ENCODE measurements at regions of chr16 and their contacts with region 1.

Region 1: DNA sequence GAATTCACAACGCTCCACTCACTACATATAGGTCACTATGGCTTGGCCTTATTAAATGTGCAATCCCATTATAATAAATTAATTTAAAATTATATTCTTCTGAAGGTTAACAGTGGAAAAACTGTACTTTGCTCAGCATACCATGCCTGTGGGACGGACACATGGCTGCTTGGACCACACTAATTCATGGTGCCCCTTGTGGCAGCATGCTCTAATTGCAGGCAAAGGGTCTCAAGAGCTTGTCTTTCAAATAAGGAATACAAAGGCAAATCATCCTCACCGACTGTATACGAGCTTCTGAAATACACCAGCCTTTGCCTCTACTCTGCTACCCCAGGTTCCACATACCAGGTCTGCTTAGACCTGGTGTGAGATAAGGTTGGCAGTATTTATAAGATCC is 11.7 kb downstream of the SMPD3 start:
- DNase-seq: no peak
- ATAC-seq: no peak
- H3K4me3 ChIP-seq: no peak overlapping the region
- H3K4me3 Mint-ChIP-seq: no peak overlapping the region
- H3K27ac ChIP-seq: no peak overlapping the region
- H3K27ac Mint-ChIP-seq: no peak overlapping the region
- H3K4me1 ChIP-seq: peaks cover 0 to 16% of the 10 kb centered on the region in 2 donors
- H3K4me1 Mint-ChIP-seq: peaks cover 7 to 30% (median 26%) of the 10 kb centered on the region in 7 donors
- H3K27me3 ChIP-seq: no peaks in the 10 kb centered on the region
- H3K27me3 Mint-ChIP-seq: peaks cover 0 to 47% (median 4%) of the 10 kb centered on the region in 5 donors

Region 2: DNA sequence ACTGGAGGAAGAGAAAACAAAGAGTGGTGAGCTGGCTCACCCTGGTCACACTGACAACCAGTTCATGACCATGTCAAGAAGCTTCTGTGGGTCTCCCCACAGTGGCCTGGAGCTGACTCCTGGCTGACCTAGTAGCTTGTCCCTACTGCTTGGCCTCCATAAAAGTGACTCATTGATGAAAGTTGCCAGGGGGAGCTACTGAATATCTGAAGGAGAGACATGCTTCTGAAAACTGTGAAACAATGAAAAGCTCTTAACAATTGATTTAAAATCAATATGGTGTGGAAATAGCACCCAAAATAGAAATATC is 10.3 kb before region 1 on chr16:
- CTCF ChIA-PET with region 1: interaction called, 5 read pairs
- POLR2A ChIA-PET with region 1: interaction called, 11 read pairs
- intact Hi-C with region 1: no loop called
- DNase-seq: no peak
- ATAC-seq: no peak
- H3K4me3 ChIP-seq: peak overlapping the region; percentile 18
- H3K4me3 Mint-ChIP-seq: peak overlapping the region in 6 of 10 donors; percentile 56 to 71 (median 58)
- H3K27ac ChIP-seq: peak overlapping the region; percentile 40
- H3K27ac Mint-ChIP-seq: peak overlapping the region in 8 of 9 donors; percentile 79 to 93 (median 86)
- H3K4me1 ChIP-seq: peaks cover 0 to 41% of the 10 kb centered on the region in 2 donors
- H3K4me1 Mint-ChIP-seq: peaks cover 10 to 52% (median 46%) of the 10 kb centered on the region in 7 donors
- H3K27me3 ChIP-seq: no peaks in the 10 kb centered on the region
- H3K27me3 Mint-ChIP-seq: peaks cover 0 to 36% (median 0%) of the 10 kb centered on the region in 5 donors

Measured in naive thymus-derived CD4-positive, alpha-beta T cell (primary cell).